Pancreas (tissue), 10 donors: ENCODE measurements at regions of chr15 and their contacts with region 1.

Region 1: DNA sequence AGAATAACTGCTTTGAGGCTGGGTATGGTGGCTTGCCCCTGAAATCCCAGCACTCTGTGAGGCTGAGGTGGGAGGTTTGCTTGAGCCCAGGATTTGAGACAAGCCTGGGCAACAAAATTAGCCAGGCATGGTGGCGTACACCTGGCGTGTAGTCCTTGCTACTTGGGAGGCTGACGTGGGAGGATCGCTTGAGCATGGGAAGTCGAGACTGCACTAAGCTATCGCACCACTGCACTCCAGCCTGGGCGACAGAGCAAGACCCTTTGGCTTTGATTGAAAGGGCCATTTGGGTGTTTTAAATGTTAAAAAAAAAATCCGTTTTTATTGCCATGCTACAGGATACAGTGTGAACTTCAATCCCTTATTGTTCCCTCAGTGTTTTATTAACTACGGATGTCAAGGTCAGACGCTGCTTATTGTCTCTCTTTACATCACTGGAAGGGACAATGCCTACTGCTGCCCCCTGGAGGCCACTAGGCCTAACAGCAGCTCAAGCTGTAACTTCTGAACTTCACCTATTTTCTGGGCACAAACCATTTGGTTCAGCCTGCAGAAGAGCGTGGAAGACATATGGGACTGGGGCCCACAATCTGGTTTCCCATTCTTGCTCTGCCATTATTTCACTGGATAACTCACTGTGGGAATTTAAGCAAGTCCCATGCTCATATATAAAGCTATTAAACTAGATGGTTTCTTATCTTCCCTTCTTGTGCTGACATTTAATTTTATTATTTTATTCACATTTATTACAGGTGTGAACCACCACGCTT is 15.3 kb upstream of the IREB2 start:
- DNase-seq: peak in 5 of 6 donors; percentile 34 to 73 (median 53)
- ATAC-seq: peak; percentile 72 to 98 (median 92)
- H3K4me3 ChIP-seq: no peak overlapping the region
- H3K27ac ChIP-seq: no peak overlapping the region
- H3K4me1 ChIP-seq: no peaks in the 10 kb centered on the region
- H3K27me3 ChIP-seq: no peaks in the 10 kb centered on the region
- CTCF ChIP-seq: peak; percentile 84 to 94 (median 92)

Region 2: GRCh38 chr15:78308422-78309032 is 114.2 kb before region 1 on chr15:
- intact Hi-C with region 1: loop called (anchors 5 to 10 kb)
- DNase-seq: peak in 5 of 6 donors; percentile 41 to 83 (median 56)
- ATAC-seq: peak; percentile 67 to 93 (median 91)
- H3K4me3 ChIP-seq: no peak overlapping the region
- H3K27ac ChIP-seq: no peak overlapping the region
- H3K4me1 ChIP-seq: no peaks in the 10 kb centered on the region
- H3K27me3 ChIP-seq: no peaks in the 10 kb centered on the region
- CTCF ChIP-seq: peak; percentile 12 to 68 (median 57)

Region 3: GRCh38 chr15:78315686-78316282 is 107.0 kb before region 1 on chr15:
- intact Hi-C with region 1: loop called in 2 of 3 experiments (anchors 5 to 10 kb)
- DNase-seq: peak in 1 of 6 donors; percentile 41
- ATAC-seq: no peak
- H3K4me3 ChIP-seq: no peak overlapping the region
- H3K27ac ChIP-seq: no peak overlapping the region
- H3K4me1 ChIP-seq: no peaks in the 10 kb centered on the region
- H3K27me3 ChIP-seq: no peaks in the 10 kb centered on the region
- CTCF ChIP-seq: no peak